ENCODE measurements at regions of chr5 and their contacts with region 1.

Region 1: GRCh38 chr5:38265546-38266179 is 7.3 kb downstream of the EGFLAM start:
- DNase-seq: peak; percentile 76
- H3K4me3 Mint-ChIP-seq: no peak overlapping the region
- H3K27ac Mint-ChIP-seq: no peak overlapping the region
- H3K4me1 Mint-ChIP-seq: no peaks in the 10 kb centered on the region
- H3K27me3 Mint-ChIP-seq: peaks cover 52% of the 10 kb centered on the region

Region 2: GRCh38 chr5:38078161-38078560 is 187.5 kb before region 1 on chr5:
- CTCF ChIA-PET with region 1: no interaction called
- intact Hi-C with region 1: no loop called
- DNase-seq: no peak
- H3K4me3 Mint-ChIP-seq: no peak overlapping the region
- H3K27ac Mint-ChIP-seq: no peak overlapping the region
- H3K4me1 Mint-ChIP-seq: no peaks in the 10 kb centered on the region
- H3K27me3 Mint-ChIP-seq: no peaks in the 10 kb centered on the region

Region 3: GRCh38 chr5:38369692-38370091 is 104.0 kb after region 1 on chr5:
- CTCF ChIA-PET with region 1: interaction called, 3 read pairs
- intact Hi-C with region 1: loop called (anchors 2 kb)
- DNase-seq: no peak
- H3K4me3 Mint-ChIP-seq: no peak overlapping the region
- H3K27ac Mint-ChIP-seq: no peak overlapping the region
- H3K4me1 Mint-ChIP-seq: peaks cover 23% of the 10 kb centered on the region
- H3K27me3 Mint-ChIP-seq: no peaks in the 10 kb centered on the region

Region 4: GRCh38 chr5:38404667-38405276 is 139.1 kb after region 1 on chr5:
- CTCF ChIA-PET with region 1: interaction called, 5 read pairs
- intact Hi-C with region 1: loop called (anchors 2 kb)
- DNase-seq: peak; percentile 44
- H3K4me3 Mint-ChIP-seq: no peak overlapping the region
- H3K27ac Mint-ChIP-seq: no peak overlapping the region
- H3K4me1 Mint-ChIP-seq: peaks cover 2% of the 10 kb centered on the region
- H3K27me3 Mint-ChIP-seq: peaks cover 23% of the 10 kb centered on the region

Measured in activated naive CD4-positive, alpha-beta T cell treated with anti-CD3 and anti-CD28 coated beads for 36 hours (primary cell).